IMR-90 (cell line): ENCODE measurements at regions of chr17 and their contacts with region 1.

Region 1: DNA sequence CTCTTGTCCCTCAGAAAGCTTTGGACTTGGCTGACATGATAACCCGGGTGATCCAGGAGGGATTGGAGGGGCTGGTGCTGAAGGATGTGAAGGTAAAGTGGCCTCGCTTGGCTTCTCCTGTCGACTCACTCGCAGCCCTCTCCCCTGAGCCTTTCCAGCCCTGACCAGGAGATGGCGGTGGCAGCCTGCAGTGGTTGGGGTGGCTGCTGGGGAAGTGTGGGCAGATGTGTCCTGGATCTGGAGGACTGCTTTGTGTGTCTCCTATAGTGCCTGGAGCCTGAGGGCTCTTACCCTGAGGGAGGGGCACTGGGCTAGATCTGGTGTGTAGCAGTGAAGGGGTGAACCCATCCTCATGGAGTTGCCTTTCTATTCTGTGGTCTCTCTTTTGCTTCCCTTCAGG is 17.9 kb downstream of the LIG3 start:
- DNase-seq: peak; percentile 70
- ATAC-seq: peak; percentile 84
- H3K4me3 ChIP-seq: no peak overlapping the region
- H3K27ac ChIP-seq: peak overlapping the region; percentile 77
- H3K4me1 ChIP-seq: peaks cover 22% of the 10 kb centered on the region
- H3K27me3 ChIP-seq: no peaks in the 10 kb centered on the region
- CTCF ChIP-seq: peak; percentile 89
- POLR2A ChIP-seq: no peak
- RAD21 ChIP-seq: peak; percentile 94

Region 2: GRCh38 chr17:34420254-34420766 is 577.9 kb before region 1 on chr17:
- CTCF ChIA-PET with region 1: no interaction called
- POLR2A ChIA-PET with region 1: no interaction called
- dilution Hi-C with region 1: no loop called
- in situ Hi-C with region 1: no loop called
- intact Hi-C with region 1: loop called (anchors 5 kb)
- DNase-seq: peak; percentile 46
- ATAC-seq: peak; percentile 95
- H3K4me3 ChIP-seq: no peak overlapping the region
- H3K27ac ChIP-seq: no peak overlapping the region
- H3K4me1 ChIP-seq: no peaks in the 10 kb centered on the region
- H3K27me3 ChIP-seq: peaks cover 27% of the 10 kb centered on the region
- CTCF ChIP-seq: peak; percentile 85
- POLR2A ChIP-seq: no peak
- RAD21 ChIP-seq: peak; percentile 91

Region 3: GRCh38 chr17:34797720-34798119 is 200.5 kb before region 1 on chr17:
- CTCF ChIA-PET with region 1: no interaction called
- POLR2A ChIA-PET with region 1: no interaction called
- dilution Hi-C with region 1: no loop called
- in situ Hi-C with region 1: no loop called
- intact Hi-C with region 1: no loop called
- DNase-seq: peak; percentile 18
- ATAC-seq: peak; percentile 91
- H3K4me3 ChIP-seq: no peak overlapping the region
- H3K27ac ChIP-seq: no peak overlapping the region
- H3K4me1 ChIP-seq: no peaks in the 10 kb centered on the region
- H3K27me3 ChIP-seq: no peaks in the 10 kb centered on the region
- CTCF ChIP-seq: no peak
- POLR2A ChIP-seq: no peak
- RAD21 ChIP-seq: no peak

Region 4: DNA sequence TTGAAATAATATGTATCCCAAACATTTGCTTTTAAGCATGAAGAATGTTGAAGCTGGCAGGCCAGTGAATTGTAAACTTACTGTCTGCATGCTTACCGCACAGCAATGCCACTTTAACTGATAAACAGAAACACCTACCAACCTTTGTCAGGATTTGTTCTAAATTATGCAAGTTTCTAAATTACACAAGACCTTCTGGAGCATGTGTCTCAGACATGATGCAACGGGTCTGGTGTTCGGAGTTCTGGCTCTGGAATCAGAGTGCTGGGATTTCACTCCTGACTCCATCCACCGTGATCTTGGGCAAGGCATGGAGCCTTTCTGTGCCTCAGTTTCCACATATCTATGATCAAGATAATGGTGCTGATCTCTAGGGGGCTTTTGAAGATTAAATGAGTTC is 148.2 kb before region 1 on chr17:
- CTCF ChIA-PET with region 1: no interaction called
- POLR2A ChIA-PET with region 1: no interaction called
- dilution Hi-C with region 1: no loop called
- in situ Hi-C with region 1: no loop called
- intact Hi-C with region 1: no loop called
- DNase-seq: no peak
- ATAC-seq: no peak
- H3K4me3 ChIP-seq: no peak overlapping the region
- H3K27ac ChIP-seq: no peak overlapping the region
- H3K4me1 ChIP-seq: no peaks in the 10 kb centered on the region
- H3K27me3 ChIP-seq: no peaks in the 10 kb centered on the region; the same call in 1 of the 2 replicates
- CTCF ChIP-seq: no peak
- POLR2A ChIP-seq: no peak
- RAD21 ChIP-seq: no peak

Region 5: GRCh38 chr17:34902831-34903547 is 95.2 kb before region 1 on chr17:
- CTCF ChIA-PET with region 1: no interaction called
- POLR2A ChIA-PET with region 1: no interaction called
- dilution Hi-C with region 1: no loop called
- in situ Hi-C with region 1: no loop called
- intact Hi-C with region 1: no loop called
- DNase-seq: no peak
- ATAC-seq: no peak
- H3K4me3 ChIP-seq: no peak overlapping the region
- H3K27ac ChIP-seq: no peak overlapping the region
- H3K4me1 ChIP-seq: no peaks in the 10 kb centered on the region
- H3K27me3 ChIP-seq: no peaks in the 10 kb centered on the region; the same call in none of the 2 replicates
- CTCF ChIP-seq: no peak
- POLR2A ChIP-seq: no peak
- RAD21 ChIP-seq: no peak

Region 6: DNA sequence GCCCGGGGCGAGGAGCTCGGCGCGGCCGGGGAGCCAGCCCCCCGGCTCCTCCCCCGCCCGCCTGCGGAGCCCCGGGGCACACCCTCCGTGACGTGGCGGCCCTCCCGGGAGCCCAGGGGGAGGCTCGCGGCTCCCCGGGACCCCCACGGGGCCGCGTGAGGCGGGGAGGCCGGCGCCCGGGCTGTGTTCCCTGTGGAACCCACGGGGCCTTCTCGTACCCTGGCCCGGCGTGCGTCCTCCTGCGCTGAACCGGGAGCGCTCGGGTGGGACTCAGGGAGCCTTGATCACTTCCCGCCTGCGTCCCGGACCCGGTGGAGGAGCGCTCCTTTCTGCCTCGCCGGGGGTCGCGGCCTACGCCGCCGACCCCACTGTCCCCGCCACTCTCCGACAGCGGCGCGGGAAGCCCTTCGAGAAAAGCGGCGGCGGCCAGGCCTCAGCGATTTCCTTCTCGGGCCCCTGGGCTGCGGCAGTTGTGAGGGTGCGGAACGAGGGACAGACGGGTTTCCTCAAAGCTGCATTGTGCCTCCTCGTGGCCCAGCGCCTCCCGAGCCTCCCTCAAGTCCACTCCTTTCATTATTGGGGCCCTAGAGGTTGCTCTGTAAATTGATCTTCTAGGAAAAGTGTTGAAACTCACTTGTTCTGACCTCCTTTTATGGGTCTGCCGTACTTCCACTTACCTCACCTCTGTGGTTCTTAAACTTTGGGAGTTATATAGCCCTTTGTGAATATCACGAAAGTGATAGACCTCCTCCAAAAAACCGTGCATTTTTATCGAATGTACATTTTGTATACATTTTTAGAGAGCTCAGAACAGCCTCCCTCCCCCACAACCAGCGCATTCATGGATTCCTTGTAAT is 17.3 kb before region 1 on chr17:
- CTCF ChIA-PET with region 1: no interaction called
- POLR2A ChIA-PET with region 1: no interaction called
- dilution Hi-C with region 1: no loop called
- in situ Hi-C with region 1: no loop called
- intact Hi-C with region 1: loop called (anchors 1 kb)
- DNase-seq: peak; percentile 80
- ATAC-seq: peak; percentile 94
- H3K4me3 ChIP-seq: peak overlapping the region; percentile 91
- H3K27ac ChIP-seq: peak overlapping the region; percentile 96
- H3K4me1 ChIP-seq: peaks cover 7% of the 10 kb centered on the region
- H3K27me3 ChIP-seq: no peaks in the 10 kb centered on the region
- CTCF ChIP-seq: peak; percentile 50
- POLR2A ChIP-seq: peak; percentile 77
- RAD21 ChIP-seq: peak; percentile 36

Region 7: DNA sequence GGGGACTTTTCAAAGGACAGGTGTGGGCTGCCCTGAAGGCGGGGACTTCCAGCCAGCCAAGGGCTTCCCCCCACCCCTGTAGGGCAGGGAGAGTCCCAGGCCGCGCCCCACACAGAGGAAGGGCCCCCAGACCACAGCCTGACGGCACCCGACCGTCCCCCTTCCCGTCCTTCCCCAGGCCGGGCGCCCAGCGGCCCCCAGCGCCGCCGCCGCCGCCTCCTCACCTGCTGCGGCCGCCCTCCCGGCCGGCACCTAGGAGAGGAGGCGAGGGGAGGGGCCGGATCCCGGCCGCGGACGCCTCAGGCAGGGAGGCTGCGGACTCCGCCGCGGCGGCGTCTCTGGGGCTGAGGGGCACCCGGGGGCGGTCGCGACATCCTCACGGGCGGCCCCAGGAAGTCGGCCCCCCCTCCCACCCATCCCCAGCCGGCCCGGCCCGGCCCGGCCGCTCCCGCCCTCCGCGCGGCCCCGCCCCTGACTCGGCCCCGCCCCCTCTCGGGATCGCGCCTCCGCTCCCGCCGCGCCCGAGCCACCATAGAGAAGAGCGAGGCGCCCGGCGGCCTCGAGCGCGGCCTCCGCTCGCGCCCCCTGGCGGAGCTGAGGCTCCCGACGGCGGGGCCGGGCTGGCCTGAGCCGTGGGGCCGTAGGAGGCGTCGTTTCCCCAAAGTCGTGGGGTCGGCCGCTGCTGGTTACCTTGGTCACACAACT is 90.8 kb after region 1 on chr17:
- CTCF ChIA-PET with region 1: interaction called, 4 read pairs
- POLR2A ChIA-PET with region 1: no interaction called
- dilution Hi-C with region 1: no loop called
- in situ Hi-C with region 1: loop called (anchors 5 kb)
- intact Hi-C with region 1: loop called (anchors 1 kb)
- DNase-seq: peak; percentile 69
- ATAC-seq: peak; percentile 89
- H3K4me3 ChIP-seq: peak overlapping the region; percentile 87
- H3K27ac ChIP-seq: peak overlapping the region; percentile 73
- H3K4me1 ChIP-seq: peaks cover 11% of the 10 kb centered on the region
- H3K27me3 ChIP-seq: no peaks in the 10 kb centered on the region
- CTCF ChIP-seq: peak; percentile 87
- POLR2A ChIP-seq: no peak; the same call in 1 of the 2 replicates
- RAD21 ChIP-seq: peak; percentile 79

Region 8: DNA sequence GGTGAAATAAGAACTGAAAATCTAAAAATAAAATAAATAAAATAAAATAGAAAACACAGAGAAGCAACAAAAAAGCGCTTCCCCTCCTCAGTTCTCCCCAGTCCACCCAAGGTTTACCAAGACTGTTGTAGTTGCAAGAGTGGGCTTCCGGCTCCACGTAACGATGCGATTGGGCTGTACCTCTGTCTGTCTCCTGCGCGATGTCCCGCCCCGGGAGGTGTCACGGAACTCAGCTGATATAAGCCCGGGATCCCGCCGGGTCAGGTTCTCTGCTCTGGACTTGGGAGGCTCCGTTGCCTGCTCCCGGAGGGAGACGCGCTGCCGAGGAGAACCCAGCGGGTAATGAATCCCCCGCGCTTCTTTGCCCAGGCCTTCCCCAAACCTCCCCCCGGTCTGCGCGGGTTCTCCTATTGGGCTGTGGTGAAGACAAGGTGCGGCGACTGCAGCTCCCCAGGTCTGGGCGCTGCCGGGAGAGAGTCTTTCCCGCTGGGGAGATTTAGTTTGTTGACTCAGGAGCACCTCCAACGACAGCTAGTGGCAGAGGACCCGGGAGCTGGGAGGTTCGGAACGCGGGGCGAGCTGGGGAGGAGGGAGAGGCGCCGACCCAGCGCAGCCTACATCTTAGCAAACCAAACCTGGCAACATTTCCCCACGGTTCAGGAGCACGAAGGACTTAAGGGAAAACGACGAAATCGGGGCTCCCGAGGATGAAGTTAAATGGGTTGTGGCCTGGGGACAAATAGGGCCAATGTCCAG is 244.8 kb after region 1 on chr17 and contains the start of gene SLFN5:
- CTCF ChIA-PET with region 1: no interaction called
- POLR2A ChIA-PET with region 1: no interaction called
- dilution Hi-C with region 1: no loop called
- in situ Hi-C with region 1: no loop called
- intact Hi-C with region 1: loop called (anchors 1 kb)
- DNase-seq: peak; percentile 90
- ATAC-seq: peak; percentile 79
- H3K4me3 ChIP-seq: peak within 1 kb of the TSS; percentile 59
- H3K27ac ChIP-seq: peak within 1 kb of the TSS; percentile 85
- H3K4me1 ChIP-seq: peaks cover 5% of the 10 kb centered on the region
- H3K27me3 ChIP-seq: no peaks in the 10 kb centered on the region
- CTCF ChIP-seq: no peak
- POLR2A ChIP-seq: peak; percentile 99
- RAD21 ChIP-seq: 0 out of 2 replicates have a peak, but pooled peaks have one; percentile 5
- total RNA-seq, gene SLFN5: 48.9 and 64.2 TPM in 2 replicates